ENCODE measurements at regions of chr18 and their contacts with region 1.

Region 1: DNA sequence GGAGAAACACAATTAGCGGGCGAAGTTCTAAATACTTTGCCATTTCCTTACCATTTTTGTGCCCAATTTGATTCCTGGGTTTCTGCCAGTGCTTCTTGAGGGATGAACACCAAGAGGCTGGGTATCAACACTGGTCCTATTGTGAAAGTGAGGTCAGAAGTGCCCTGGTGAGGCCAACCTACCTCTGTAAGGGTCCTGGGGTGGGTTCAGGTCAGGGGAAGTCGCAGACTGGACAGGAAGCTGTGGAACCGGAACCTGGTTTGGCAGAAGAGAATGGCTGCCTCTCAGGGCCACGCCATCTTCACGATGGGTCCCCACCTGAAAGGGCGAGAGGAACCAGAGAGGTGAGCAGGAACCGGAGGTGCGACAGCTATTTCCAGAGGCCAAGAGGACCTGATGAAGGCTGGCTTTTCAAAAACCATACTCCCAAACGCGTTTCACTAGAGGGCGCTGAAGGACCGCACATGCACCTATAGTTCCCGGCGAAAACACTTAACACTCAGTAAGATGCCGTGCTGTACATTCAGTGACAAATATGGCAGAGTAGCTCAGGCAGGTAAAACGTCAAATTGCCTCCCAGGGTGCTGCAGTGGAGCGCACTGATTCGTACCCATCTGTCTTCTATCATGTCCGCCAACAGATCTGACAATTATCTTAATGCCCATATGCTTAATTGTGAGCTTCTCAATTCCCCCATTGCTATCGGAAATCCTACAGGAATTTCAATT is 275.3 kb upstream of the CCDC68 start:
- DNase-seq: peak; percentile 69
- H3K4me3 Mint-ChIP-seq: no peak overlapping the region
- H3K27ac Mint-ChIP-seq: no peak overlapping the region
- H3K4me1 Mint-ChIP-seq: peaks cover 6% of the 10 kb centered on the region
- H3K27me3 Mint-ChIP-seq: no peaks in the 10 kb centered on the region

Region 2: GRCh38 chr18:55224086-55224625 is 10.4 kb before region 1 on chr18:
- CTCF ChIA-PET with region 1: interaction called, 10 read pairs
- POLR2A ChIA-PET with region 1: no interaction called
- DNase-seq: no peak
- H3K4me3 Mint-ChIP-seq: no peak overlapping the region
- H3K27ac Mint-ChIP-seq: no peak overlapping the region
- H3K4me1 Mint-ChIP-seq: no peaks in the 10 kb centered on the region
- H3K27me3 Mint-ChIP-seq: no peaks in the 10 kb centered on the region

Region 3: DNA sequence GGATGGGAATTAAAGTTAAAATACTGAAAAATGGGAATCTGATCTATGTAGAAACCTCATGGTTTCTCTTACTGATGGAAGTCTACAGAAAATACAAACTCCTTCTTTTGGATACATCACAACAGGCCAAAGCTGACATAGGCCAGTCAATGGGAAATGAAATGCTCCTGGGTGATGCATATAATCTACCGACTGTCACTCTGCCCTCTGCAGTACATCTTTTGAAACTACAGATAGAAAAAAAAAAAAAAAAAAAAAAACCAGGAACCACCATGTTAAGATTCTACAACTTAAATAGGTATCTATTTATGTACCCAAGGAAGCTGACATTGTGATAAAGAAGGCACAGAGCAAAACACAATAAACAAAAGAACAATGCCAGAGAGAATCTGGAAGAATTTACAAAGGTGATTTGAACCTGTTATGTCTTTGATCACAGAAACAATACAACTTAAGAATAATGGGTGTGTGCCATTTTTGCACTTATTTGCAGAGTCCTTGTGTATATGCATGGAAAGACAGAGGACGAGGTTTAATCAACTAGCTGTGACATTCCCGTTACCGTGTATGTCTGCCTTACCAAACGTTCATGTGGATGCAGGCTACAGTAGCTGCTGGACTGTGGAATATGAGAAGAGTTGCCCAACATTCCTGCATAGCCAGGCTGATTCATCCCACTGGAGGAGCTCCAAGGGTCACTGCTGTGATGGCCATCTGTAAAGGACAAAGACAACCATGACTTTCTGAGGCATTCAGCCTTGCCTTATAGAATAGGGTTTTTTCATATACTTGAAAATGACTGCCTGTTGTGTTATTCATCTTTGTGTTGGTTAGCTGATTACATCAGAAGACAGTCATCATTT is 40.7 kb after region 1 on chr18:
- CTCF ChIA-PET with region 1: interaction called, 43 read pairs
- POLR2A ChIA-PET with region 1: no interaction called
- DNase-seq: no peak
- H3K4me3 Mint-ChIP-seq: no peak overlapping the region
- H3K27ac Mint-ChIP-seq: no peak overlapping the region
- H3K4me1 Mint-ChIP-seq: no peaks in the 10 kb centered on the region
- H3K27me3 Mint-ChIP-seq: no peaks in the 10 kb centered on the region

Measured in activated CD4-positive, alpha-beta memory T cell treated with anti-CD3 and anti-CD28 coated beads, Interleukin-2, amount 10 ng/mL, durations not matched to agents 7 days and 5 days (primary cell).